ENCODE measurements at regions of chr11 and their contacts with region 1.

Region 1: DNA sequence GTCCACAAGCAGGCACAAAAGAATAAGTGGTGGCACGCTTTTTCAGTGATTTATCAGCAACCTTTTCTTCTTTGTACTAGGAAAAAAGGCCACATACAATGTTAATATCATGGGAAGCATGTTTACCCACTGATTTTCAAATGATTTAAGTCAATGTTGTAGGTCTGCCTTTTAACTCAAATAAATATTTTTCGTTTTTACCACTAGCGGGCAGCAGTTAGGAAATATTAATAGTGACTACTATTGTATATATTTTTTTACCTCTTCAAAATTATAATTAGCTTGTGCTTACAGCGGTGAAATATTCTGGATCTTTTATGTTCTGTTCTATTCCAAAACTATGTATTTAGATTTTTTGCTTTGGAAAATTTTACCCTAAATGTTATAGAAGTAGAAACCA is 6.4 kb upstream of the SLC17A6 start:
- DNase-seq: no peak
- ATAC-seq: no peak

Region 2: DNA sequence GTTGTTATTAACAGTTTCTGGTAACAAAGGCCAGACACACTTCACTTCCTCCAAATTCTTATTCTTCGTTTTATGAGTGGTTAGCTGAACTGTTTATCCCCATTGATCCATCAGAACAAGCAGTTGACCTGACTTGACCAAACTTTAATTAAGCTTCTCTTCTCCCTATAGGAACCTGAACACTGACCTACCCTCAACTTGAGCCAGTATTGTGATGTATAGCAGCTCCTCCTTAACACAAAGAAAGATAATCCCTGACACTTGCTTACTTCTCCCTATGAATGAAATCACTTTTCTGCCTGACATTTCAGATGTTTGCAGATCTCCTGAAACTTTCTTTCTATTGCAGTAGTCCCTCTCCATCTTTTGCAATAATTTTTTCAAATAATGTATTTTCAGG is 97.0 kb before region 1 on chr11:
- intact Hi-C with region 1: no loop called
- DNase-seq: no peak
- ATAC-seq: no peak

Region 3: DNA sequence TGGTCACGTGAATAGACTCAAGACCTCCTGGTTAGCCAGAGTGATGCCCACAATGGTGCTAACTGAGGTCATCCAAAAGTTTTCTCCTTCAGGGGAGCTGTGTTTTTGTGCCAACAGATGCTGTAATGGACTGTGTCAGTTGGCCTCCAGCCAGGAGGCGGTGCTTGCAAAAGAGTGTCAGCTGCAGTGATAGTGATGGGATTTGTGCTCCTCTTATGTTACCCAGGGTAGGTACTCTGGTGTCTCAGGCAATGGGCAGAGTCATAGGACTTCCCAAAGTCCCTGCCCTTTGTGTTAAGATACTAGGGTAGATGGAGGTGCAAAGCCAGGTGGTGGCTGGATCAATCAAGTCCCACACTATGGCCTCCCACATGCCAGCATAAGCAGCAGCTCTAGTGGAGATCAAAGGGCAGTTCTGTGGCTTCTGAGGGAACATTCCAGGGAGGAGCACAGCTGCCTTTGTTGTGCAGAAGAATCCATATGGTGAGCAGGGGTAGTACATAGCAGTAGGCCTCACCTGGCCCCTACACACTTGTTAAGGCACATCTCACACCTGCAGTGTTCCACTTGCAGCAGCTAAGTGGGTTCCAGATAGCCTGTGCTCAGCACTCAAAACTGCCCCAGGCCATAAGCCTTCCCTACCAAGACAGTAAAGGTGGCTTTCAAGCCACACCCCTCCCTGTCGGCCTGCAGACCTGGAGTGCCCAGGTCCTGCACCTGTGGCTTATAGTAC is 303.3 kb after region 1 on chr11:
- intact Hi-C with region 1: no loop called
- DNase-seq: peak; percentile 40 to 42
- ATAC-seq: peak; percentile 89

Region 4: DNA sequence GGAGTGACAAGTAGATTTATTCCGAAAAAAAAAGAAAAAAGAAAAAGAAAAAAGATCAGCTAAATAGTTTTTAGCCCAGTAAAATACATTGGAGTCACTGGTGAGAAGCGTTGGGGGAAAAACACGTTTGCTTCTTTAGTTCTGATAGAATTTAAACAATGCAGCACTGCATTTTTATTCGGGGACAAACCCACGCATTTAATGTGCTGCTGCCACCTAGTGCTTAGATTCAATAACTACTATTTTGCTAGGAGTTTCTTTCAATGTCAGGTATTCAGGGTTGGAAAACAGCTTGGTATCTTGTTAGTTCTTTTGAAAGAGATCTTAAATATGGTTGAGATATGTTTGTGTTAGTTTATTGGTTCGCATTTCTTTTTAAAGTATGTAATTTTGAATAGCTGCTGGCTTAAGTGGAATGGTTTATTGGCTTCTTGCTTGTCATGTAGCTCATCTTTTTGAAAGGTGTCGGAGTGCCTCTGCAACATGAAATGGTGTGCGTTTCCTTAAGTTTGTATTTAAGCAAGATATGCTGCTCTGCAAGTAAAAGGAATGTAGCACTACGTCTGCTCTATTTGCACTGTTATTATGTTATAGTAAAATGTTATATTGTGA is 455.9 kb after region 1 on chr11:
- intact Hi-C with region 1: loop called in 1 of 2 experiments (anchors 5 kb)
- DNase-seq: no peak
- ATAC-seq: peak; percentile 53